AG04449 (cell line): ENCODE measurements at regions of chr4 and their contacts with region 1.

Region 1: DNA sequence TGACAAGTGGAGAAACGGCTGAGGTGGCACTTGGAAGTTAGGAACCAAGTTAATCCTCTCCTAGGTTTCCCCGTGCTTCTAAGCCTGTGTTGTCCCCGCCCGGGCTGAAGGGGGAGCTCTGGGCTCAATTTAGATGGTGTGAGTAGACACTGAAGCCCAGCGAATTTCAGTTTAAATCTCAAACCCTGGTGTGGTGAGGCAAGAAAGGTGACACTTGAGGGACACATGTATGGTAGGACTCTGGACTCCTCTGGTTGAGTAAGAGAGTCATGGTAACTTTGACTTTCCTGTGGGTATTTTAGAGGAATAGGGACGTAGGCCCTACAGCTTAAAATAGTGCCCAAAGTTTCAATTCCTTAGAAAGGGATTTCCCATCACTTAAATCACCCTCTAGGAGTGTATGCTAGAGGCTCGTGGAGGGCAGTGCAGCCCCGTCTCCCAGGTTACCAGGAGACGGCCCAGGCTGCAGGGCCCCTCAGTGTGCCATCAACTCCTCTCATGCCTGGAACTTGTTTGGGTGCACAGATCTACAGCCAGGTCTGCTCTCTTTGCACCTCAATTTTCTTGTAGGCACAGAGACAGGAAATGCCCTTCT is 24.0 kb downstream of the HAND2 start:
- DNase-seq: no peak
- H3K4me3 ChIP-seq: no peak overlapping the region
- CTCF ChIP-seq: peak; percentile 82

Region 2: GRCh38 chr4:173057901-173058300 is 448.1 kb before region 1 on chr4:
- CTCF ChIA-PET with region 1: no interaction called
- POLR2A ChIA-PET with region 1: no interaction called
- DNase-seq: no peak
- H3K4me3 ChIP-seq: no peak overlapping the region
- CTCF ChIP-seq: no peak

Region 3: GRCh38 chr4:173365359-173365996 is 140.5 kb before region 1 on chr4:
- CTCF ChIA-PET with region 1: no interaction called
- POLR2A ChIA-PET with region 1: no interaction called
- DNase-seq: no peak
- H3K4me3 ChIP-seq: no peak overlapping the region
- CTCF ChIP-seq: no peak

Region 4: GRCh38 chr4:173494013-173494970 is 11.7 kb before region 1 on chr4:
- CTCF ChIA-PET with region 1: interaction called, 36 read pairs
- POLR2A ChIA-PET with region 1: no interaction called
- DNase-seq: no peak
- H3K4me3 ChIP-seq: peak overlapping the region; percentile 31
- CTCF ChIP-seq: peak; percentile 85

Region 5: GRCh38 chr4:173522123-173522950 is 16.3 kb after region 1 on chr4:
- CTCF ChIA-PET with region 1: interaction called, 15 read pairs
- POLR2A ChIA-PET with region 1: no interaction called
- DNase-seq: peak; percentile 40
- H3K4me3 ChIP-seq: peak overlapping the region; percentile 64
- CTCF ChIP-seq: no peak

Region 6: GRCh38 chr4:173827707-173828106 is 321.7 kb after region 1 on chr4:
- CTCF ChIA-PET with region 1: interaction called, 16 read pairs
- POLR2A ChIA-PET with region 1: no interaction called
- DNase-seq: no peak
- H3K4me3 ChIP-seq: no peak overlapping the region
- CTCF ChIP-seq: no peak

Region 7: DNA sequence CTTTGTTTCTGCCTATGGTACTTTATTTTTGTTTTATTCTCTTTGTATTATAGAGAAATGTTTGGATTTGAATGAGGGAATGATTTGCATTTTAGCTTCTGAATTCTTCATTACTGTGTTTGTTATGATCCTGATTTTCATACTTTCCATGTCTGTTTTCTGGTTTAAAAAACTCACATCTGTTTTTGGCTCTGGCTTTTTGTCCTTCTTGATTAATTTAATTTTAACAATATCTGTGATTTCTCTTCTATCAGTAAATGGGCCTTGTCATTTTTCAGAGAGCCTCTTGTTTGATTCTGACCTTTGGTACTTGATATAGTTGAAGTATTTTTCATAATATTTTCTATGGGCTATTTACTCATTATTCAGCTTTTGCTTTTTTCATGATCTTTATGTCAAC is 365.6 kb after region 1 on chr4:
- CTCF ChIA-PET with region 1: no interaction called
- POLR2A ChIA-PET with region 1: no interaction called
- DNase-seq: no peak
- H3K4me3 ChIP-seq: no peak overlapping the region
- CTCF ChIP-seq: no peak

Region 8: GRCh38 chr4:173990126-173990868 is 484.3 kb after region 1 on chr4:
- CTCF ChIA-PET with region 1: interaction called, 39 read pairs
- POLR2A ChIA-PET with region 1: no interaction called
- DNase-seq: peak; percentile 9
- H3K4me3 ChIP-seq: no peak overlapping the region
- CTCF ChIP-seq: peak; percentile 49

Region 9: GRCh38 chr4:174120446-174121295 is 614.6 kb after region 1 on chr4:
- CTCF ChIA-PET with region 1: interaction called, 27 read pairs
- POLR2A ChIA-PET with region 1: no interaction called
- DNase-seq: peak; percentile 19
- H3K4me3 ChIP-seq: peak overlapping the region; percentile 56
- CTCF ChIP-seq: peak; percentile 31

Region 10: DNA sequence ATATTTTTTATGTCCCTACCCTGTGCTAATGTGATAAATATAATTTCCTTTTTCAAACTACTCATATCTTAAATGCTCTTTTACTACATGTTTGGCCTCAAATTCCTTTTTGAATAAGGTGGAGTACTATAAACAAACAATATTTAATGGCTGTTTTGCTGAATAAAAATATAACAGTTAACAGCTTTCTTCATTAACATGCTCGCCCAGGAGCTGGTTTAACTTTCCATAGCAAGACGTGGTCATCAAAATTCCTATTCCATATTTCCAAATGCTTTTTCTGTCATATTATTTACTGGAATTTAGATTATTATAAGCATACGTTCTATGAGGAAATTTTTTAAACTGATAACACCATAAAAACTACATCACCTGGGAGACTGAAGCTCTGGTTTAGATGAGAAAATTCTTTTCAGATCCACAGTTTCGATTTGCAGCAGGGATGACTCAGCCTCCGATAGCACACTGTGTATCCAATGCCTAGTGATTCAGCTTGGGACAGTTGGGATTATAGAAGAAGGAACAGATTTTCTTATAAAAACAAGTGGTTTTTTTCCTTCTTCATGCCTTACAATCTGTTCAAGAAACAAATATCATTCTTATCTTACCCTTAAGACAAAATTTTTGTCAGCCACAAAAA is 648.3 kb after region 1 on chr4:
- CTCF ChIA-PET with region 1: interaction called, 11 read pairs
- POLR2A ChIA-PET with region 1: no interaction called
- DNase-seq: peak; percentile 7
- H3K4me3 ChIP-seq: no peak overlapping the region
- CTCF ChIP-seq: no peak